Activated CD4-positive, alpha-beta memory T cell treated with anti-CD3 and anti-CD28 coated beads for 36 hours (primary cell): ENCODE measurements at regions of chr7 and their contacts with region 1.

Region 1: DNA sequence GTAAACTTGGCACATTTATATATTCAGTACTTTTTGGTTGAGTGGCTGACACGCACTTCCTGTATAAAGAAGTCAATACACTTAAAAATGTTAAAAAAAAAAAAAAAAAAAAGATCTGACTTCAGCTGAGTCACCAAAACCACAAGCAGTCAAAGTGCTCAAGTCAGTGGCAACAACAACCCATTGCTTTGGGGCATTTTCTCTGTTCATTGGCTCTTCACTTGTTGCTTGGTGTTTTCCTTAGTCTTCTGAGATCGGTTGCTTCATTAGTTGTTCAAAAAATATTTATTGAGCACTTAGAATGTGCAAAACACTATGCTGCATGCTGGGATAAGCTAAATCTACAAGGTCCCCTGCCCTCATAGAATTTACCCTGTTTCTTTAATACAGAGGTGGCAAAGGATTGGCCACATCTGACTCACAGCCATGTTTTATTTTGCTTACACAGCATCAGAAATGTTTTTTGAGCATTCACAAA is 63.7 kb downstream of the ZNRF2 start:
- DNase-seq: peak; percentile 56
- H3K4me3 Mint-ChIP-seq: peak overlapping the region; percentile 75
- H3K27ac Mint-ChIP-seq: peak overlapping the region; percentile 90
- H3K4me1 Mint-ChIP-seq: peaks cover 67% of the 10 kb centered on the region
- H3K27me3 Mint-ChIP-seq: no peaks in the 10 kb centered on the region

Region 2: DNA sequence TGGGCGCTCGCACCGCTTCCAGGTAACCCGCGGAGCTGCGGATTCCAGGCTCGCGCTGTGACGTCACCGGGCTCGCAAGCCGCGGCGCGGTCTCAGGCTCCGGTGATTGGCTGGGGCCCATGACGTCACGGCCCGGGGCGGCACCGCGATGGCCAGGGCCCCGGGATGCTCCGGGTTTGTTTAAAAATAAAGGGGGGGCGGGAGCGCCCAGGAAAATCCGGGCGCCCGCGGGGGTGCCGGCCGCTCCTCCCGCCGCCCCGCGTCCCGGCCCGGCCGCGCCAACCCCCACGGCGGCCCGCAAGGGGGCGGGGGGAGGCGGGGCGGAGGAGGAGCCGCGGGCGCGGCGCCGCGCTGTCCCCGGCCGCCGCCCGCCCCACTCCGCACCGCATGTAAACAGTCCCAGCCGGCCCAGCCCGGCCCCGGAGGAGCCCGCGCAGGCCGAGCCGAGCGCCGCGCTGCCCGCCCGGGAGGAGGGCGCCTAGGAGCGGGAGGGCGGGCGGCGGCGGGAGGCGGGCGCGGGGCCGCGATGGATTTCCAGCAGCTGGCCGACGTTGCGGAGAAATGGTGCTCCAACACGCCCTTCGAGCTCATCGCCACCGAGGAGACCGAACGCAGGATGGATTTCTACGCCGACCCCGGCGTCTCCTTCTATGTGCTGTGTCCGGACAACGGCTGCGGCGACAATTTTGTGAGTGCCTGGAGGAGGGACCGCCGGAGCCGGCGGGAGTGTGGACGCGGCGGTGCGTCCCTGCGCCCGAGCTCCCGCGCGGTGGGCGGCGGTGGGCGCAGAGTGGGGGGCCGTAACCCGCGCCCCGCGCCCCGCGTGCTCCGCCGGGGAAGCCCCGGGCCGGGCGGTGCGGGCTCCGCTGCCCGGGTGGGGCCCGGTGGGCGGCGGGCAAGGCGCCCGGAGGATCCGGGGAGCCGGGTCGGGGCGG is 213.2 kb before region 1 on chr7 and contains the start of gene MTURN:
- CTCF ChIA-PET with region 1: no interaction called
- POLR2A ChIA-PET with region 1: no interaction called
- intact Hi-C with region 1: loop called (anchors 10 kb)
- DNase-seq: peak; percentile 88
- H3K4me3 Mint-ChIP-seq: peak within 1 kb of the TSS; percentile 86
- H3K27ac Mint-ChIP-seq: peak within 1 kb of the TSS; percentile 45
- H3K4me1 Mint-ChIP-seq: peaks cover 5% of the 10 kb centered on the region
- H3K27me3 Mint-ChIP-seq: no peaks in the 10 kb centered on the region
- total RNA-seq, gene MTURN: 3.1 to 3.7 TPM

Region 3: DNA sequence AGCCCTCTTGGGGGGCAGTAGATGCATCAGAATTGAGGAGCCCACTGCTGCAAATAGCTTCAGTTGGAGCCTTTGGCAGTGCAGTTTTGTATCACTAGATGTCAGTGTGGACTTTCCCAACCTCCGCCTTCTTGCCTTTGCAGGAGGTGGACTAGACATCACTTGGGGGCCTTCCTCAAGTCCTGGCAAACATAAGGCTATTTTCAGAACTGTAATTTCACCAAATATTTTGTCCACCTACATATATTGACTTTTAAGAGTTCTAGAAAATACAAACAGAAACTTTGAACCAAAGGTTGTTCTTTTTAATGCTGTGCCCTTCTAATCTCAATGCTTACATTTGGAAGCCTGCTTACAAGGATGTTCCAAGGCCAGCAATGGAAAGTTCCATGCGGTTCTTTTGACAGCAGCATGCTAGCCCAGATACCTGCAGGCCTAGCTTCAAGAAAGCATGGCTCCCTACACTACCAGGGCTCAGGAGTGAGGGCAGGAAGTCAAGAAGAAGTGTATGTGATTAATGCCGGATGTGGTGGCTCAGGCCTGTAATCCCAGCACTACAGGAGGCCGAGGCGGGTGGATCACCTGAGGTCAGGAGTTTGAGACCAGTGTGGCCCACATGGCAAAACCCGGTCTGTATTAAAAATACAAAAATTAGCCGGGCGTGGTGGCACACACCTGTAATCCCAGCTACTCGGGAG is 71.8 kb before region 1 on chr7:
- CTCF ChIA-PET with region 1: interaction called, 21 read pairs
- POLR2A ChIA-PET with region 1: no interaction called
- intact Hi-C with region 1: loop called (anchors 1 kb)
- DNase-seq: peak; percentile 61
- H3K4me3 Mint-ChIP-seq: no peak overlapping the region
- H3K27ac Mint-ChIP-seq: no peak overlapping the region
- H3K4me1 Mint-ChIP-seq: peaks cover 5% of the 10 kb centered on the region
- H3K27me3 Mint-ChIP-seq: no peaks in the 10 kb centered on the region

Region 4: GRCh38 chr7:30308389-30308788 is 39.7 kb before region 1 on chr7:
- CTCF ChIA-PET with region 1: interaction called, 3 read pairs
- POLR2A ChIA-PET with region 1: interaction called, 6 read pairs
- intact Hi-C with region 1: loop called (anchors 1 kb)
- DNase-seq: peak; percentile 24
- H3K4me3 Mint-ChIP-seq: no peak overlapping the region
- H3K27ac Mint-ChIP-seq: no peak overlapping the region
- H3K4me1 Mint-ChIP-seq: peaks cover 62% of the 10 kb centered on the region
- H3K27me3 Mint-ChIP-seq: no peaks in the 10 kb centered on the region

Region 5: DNA sequence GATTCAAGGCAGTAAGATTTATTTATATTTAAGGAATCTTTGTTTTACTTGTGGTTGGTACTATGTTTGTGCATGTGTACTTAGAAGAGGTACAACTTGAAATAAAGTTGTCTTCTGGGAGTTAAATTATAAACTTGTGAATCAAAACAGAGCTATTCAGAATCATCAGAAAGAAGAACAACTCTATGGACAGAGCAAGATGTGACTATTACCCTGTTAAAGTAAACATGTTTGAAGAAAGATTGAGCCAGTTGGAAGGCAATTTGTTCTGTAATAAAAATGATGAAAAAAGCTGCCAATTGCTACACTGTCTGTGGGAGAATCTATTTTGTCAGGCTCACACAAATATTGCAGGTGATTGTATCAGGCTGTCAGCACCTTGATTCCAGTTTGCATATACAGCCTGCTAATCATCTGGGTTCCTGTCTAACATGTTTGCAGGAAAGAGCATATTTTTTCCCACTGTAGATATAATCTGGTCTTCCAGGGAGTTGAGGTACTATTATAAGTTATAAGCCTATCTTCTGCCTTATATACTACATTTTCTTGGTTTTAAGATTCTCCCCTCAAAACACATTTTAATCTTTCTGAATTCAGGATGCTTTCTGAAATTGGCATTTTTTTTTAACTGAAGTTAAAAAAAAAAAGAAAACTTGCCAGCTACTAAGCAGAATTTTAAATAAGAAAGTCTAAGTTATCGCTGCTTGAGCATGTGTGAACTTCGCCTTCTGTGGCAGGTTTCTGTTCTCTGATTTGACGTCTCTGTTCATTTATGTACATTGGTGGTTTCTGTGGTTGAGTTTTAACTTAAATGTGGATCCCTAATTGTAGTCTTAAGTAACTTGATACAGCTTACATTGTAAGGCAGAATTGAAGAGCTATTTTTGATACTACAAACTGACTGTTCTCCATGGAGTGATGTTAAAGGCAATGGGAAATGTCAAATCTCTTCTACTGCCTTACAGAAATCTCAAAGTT is 17.7 kb before region 1 on chr7:
- CTCF ChIA-PET with region 1: no interaction called
- POLR2A ChIA-PET with region 1: no interaction called
- intact Hi-C with region 1: loop called (anchors 1 kb)
- DNase-seq: peak; percentile 41
- H3K4me3 Mint-ChIP-seq: peak overlapping the region; percentile 27
- H3K27ac Mint-ChIP-seq: peak overlapping the region; percentile 19
- H3K4me1 Mint-ChIP-seq: peaks cover 62% of the 10 kb centered on the region
- H3K27me3 Mint-ChIP-seq: no peaks in the 10 kb centered on the region

Region 6: GRCh38 chr7:30478349-30479201 is 130.5 kb after region 1 on chr7 and contains the start of gene NOD1:
- CTCF ChIA-PET with region 1: no interaction called
- POLR2A ChIA-PET with region 1: no interaction called
- intact Hi-C with region 1: loop called (anchors 2 kb)
- DNase-seq: peak; percentile 77
- H3K4me3 Mint-ChIP-seq: peak within 1 kb of the TSS; percentile 91
- H3K27ac Mint-ChIP-seq: peak within 1 kb of the TSS; percentile 85
- H3K4me1 Mint-ChIP-seq: peaks cover 51% of the 10 kb centered on the region
- H3K27me3 Mint-ChIP-seq: no peaks in the 10 kb centered on the region
- total RNA-seq, gene NOD1: 12.8 to 14.0 TPM

Region 7: DNA sequence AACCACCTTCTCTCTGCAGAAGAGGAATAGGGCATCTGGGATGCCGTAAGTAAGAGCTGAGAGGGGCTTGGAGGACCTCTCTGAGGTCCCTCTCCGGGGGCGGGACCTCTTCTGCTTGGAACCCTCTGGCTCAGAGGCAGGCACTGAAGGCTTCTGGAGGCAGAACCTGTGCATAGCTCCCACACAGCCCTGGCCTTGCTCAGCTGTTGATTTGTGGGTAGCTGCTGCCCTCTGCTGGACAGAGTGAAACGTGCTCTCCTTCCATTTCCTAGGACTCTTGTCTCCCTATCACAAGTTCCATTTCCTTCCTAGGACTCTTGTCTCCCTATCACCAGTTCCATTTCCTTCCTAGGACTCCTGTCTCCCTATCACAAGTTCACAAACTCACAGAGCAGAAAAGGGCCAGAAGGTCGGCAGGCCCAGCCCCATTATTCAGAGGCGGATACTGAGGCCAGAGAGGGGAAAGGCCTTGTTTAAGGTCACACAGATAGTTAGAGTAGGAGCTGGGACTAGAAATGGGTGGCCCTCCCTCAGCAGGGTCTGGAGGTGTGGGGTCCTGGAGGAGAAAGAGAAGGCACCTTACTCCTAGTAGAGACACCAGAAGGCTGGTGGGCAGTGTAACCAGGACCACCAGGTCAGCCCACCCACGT is 216.2 kb after region 1 on chr7:
- CTCF ChIA-PET with region 1: interaction called, 4 read pairs
- POLR2A ChIA-PET with region 1: no interaction called
- intact Hi-C with region 1: loop called (anchors 5 kb)
- DNase-seq: peak; percentile 85
- H3K4me3 Mint-ChIP-seq: no peak overlapping the region
- H3K27ac Mint-ChIP-seq: no peak overlapping the region
- H3K4me1 Mint-ChIP-seq: peaks cover 2% of the 10 kb centered on the region
- H3K27me3 Mint-ChIP-seq: no peaks in the 10 kb centered on the region